ENCODE measurements at regions of chr19 and their contacts with region 1.

Region 1: GRCh38 chr19:17610384-17610783 is 54.9 kb downstream of the COLGALT1 start:
- DNase-seq: peak in 1 of 35 experiments; percentile 25
- ATAC-seq: no peak
- H3K4me3 ChIP-seq: no peak overlapping the region
- H3K4me3 Mint-ChIP-seq: no peak overlapping the region
- H3K27ac ChIP-seq: no peak overlapping the region
- H3K27ac Mint-ChIP-seq: no peak overlapping the region
- H3K4me1 ChIP-seq: peaks cover 0 to 15% of the 10 kb centered on the region in 2 experiments
- H3K4me1 Mint-ChIP-seq: peaks cover 5 to 10% (median 7%) of the 10 kb centered on the region in 3 donors
- H3K27me3 ChIP-seq: peaks cover 0 to 28% of the 10 kb centered on the region in 2 experiments
- H3K27me3 Mint-ChIP-seq: peaks cover 7 to 12% of the 10 kb centered on the region in 2 donors

Region 2: GRCh38 chr19:17582613-17583012 is 27.8 kb before region 1 on chr19:
- CTCF ChIA-PET with region 1: interaction called in 1 of 2 experiments, 10 read pairs
- POLR2A ChIA-PET with region 1: no interaction called
- DNase-seq: no peak
- ATAC-seq: no peak
- H3K4me3 ChIP-seq: no peak overlapping the region
- H3K4me3 Mint-ChIP-seq: no peak overlapping the region
- H3K27ac ChIP-seq: no peak overlapping the region
- H3K27ac Mint-ChIP-seq: no peak overlapping the region
- H3K4me1 ChIP-seq: no peaks in the 10 kb centered on the region
- H3K4me1 Mint-ChIP-seq: peaks cover 2 to 9% (median 3%) of the 10 kb centered on the region in 3 donors
- H3K27me3 ChIP-seq: peaks cover 0 to 2% of the 10 kb centered on the region in 2 experiments
- H3K27me3 Mint-ChIP-seq: no peaks in the 10 kb centered on the region

Region 3: DNA sequence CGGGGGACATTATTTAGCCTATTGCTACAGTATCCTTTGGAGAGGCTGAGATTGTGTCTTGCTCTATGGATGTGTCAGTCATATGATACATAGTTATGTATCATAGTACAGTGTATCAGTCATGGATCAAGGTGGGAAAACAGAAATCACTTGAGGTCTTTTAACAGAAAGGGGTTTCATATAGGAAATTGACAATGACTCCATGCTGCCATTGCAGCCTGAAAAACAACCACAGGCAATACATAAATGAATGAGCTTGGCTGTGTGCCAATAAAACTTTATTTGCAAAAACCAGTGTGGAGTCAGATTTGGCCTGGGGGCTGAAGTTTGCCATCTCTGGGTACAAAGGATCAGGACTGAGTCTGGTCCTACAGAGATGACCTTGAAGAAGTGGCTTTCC is 19.5 kb before region 1 on chr19:
- CTCF ChIA-PET with region 1: interaction called, 6 to 10 read pairs
- POLR2A ChIA-PET with region 1: interaction called in 1 of 2 experiments, 10 read pairs
- DNase-seq: no peak
- ATAC-seq: no peak
- H3K4me3 ChIP-seq: no peak overlapping the region
- H3K4me3 Mint-ChIP-seq: no peak overlapping the region
- H3K27ac ChIP-seq: no peak overlapping the region
- H3K27ac Mint-ChIP-seq: no peak overlapping the region
- H3K4me1 ChIP-seq: no peaks in the 10 kb centered on the region
- H3K4me1 Mint-ChIP-seq: no peaks in the 10 kb centered on the region
- H3K27me3 ChIP-seq: peaks cover 2 to 12% of the 10 kb centered on the region in 2 experiments
- H3K27me3 Mint-ChIP-seq: peaks cover 5 to 26% of the 10 kb centered on the region in 2 donors

Region 4: DNA sequence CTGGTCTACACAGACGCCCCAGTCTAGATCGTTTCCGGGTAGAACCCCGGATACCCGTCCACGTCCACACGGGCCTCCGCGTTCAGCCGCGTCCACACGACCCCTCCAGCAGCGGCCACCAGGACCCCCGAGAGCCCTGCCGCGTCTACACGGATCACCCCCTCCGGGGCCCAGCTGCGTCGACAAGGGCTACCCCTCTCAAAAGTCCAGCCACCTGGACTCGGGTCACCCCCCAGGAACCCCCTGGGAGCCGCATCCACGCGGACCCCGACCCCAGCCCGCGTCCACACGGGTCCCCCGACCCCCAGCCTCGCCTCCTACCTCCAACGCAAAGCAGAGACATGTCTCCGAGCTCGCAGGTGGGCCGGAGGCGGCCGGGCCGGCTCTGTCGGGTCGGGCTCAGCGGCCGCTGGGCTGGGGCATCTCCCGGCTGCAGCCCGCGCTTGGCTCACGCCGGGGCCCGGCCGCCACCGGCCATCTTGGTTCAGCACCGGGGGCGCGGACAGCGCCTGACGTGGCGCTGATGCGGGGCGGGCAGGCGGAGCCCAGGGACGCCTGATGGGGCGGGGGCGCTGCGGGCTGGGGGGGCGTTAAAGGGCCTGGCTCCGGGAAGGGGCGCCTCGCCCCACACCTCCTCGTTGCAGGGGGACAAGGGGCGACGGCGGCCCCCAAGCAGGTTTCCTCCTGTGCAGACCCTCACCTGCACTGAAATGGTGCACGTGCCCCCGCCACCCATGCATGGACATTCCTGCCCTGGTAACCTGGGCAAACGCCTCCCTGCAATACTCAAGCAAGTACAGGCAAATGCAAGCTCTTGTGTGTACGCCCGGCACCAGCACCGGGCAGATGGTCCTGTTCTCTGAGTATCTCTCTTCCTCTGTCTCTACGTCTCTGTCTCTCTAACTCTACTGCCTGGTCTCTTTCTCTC is 77.7 kb after region 1 on chr19 and contains the start of gene UNC13A:
- CTCF ChIA-PET with region 1: no interaction called
- POLR2A ChIA-PET with region 1: no interaction called
- DNase-seq: peak in 33 of 35 experiments; percentile 12 to 63 (median 41)
- ATAC-seq: peak; percentile 53 to 86 (median 65)
- H3K4me3 ChIP-seq: no peak within 1 kb of the TSS
- H3K4me3 Mint-ChIP-seq: peak within 1 kb of the TSS in 2 of 3 donors; percentile 25 to 56
- H3K27ac ChIP-seq: no peak within 1 kb of the TSS
- H3K27ac Mint-ChIP-seq: peak within 1 kb of the TSS in 1 of 2 donors; percentile 40
- H3K4me1 ChIP-seq: peaks cover 0 to 28% of the 10 kb centered on the region in 2 experiments
- H3K4me1 Mint-ChIP-seq: peaks cover 13 to 22% (median 14%) of the 10 kb centered on the region in 3 donors
- H3K27me3 ChIP-seq: peaks cover 17 to 79% of the 10 kb centered on the region in 2 experiments
- H3K27me3 Mint-ChIP-seq: peaks cover 51 to 74% of the 10 kb centered on the region in 2 donors
- total RNA-seq, gene UNC13A: 0.07 to 0.18 (median 0.13) TPM in 4 of 5 donors, not detected in the other